ENCODE measurements at regions of chr19 and their contacts with region 1.

Region 1: GRCh38 chr19:50537762-50538230 is 24.1 kb upstream of the ASPDH start:
- DNase-seq: no peak
- ATAC-seq: peak; percentile 88
- H3K4me3 ChIP-seq: no peak overlapping the region
- H3K27ac ChIP-seq: no peak overlapping the region
- H3K4me1 ChIP-seq: peaks cover 8% of the 10 kb centered on the region
- H3K27me3 ChIP-seq: no peaks in the 10 kb centered on the region
- CTCF ChIP-seq: peak; percentile 77 to 83 (median 82)
- EP300 ChIP-seq: no peak
- POLR2A ChIP-seq: no peak
- RAD21 ChIP-seq: peak; percentile 58

Region 2: DNA sequence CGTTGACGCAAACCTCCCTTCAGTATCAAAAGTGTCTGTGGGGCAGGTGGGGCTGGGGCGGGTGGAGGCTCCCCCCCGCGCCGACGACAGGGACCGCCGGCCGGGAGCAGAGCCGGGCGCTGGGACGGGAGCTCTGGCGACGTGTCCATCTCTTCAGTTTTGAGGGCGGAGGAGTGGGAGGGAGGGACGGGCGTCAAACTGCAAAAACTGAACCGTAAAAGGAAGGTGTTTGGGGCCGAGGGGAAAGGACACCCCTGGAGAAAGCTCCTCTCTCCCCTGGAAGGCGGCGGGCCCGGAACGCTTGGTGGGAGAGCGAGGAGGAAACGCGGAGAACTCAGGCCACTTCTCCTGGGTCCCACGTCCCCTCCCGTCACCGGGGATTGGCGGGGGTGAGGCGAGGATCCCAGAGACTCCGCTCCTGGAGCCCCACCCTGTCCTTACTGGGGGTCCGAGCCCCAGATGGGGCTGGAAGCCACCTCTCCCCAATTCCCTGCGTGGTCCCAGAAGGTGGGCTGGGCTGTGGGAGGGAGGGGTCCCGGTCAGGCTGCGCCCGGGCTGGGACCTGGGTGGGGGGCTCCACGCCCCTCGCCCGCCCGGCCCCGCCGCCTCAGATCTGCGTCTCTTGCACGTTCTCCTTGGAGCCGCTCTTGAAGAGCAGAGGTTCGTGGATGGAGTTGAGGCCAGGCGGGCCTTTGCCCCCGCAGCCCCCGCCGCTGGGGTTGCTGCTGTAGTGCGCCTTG is 20.7 kb before region 1 on chr19:
- CTCF ChIA-PET with region 1: no interaction called
- POLR2A ChIA-PET with region 1: no interaction called
- RAD21 ChIA-PET with region 1: no interaction called
- SMC1A ChIA-PET with region 1: no interaction called
- in situ Hi-C with region 1: no loop called
- intact Hi-C with region 1: no loop called
- DNase-seq: no peak
- ATAC-seq: no peak
- H3K4me3 ChIP-seq: no peak overlapping the region
- H3K27ac ChIP-seq: no peak overlapping the region
- H3K4me1 ChIP-seq: no peaks in the 10 kb centered on the region
- H3K27me3 ChIP-seq: no peaks in the 10 kb centered on the region
- CTCF ChIP-seq: no peak
- EP300 ChIP-seq: no peak
- POLR2A ChIP-seq: no peak
- RAD21 ChIP-seq: no peak

Region 3: DNA sequence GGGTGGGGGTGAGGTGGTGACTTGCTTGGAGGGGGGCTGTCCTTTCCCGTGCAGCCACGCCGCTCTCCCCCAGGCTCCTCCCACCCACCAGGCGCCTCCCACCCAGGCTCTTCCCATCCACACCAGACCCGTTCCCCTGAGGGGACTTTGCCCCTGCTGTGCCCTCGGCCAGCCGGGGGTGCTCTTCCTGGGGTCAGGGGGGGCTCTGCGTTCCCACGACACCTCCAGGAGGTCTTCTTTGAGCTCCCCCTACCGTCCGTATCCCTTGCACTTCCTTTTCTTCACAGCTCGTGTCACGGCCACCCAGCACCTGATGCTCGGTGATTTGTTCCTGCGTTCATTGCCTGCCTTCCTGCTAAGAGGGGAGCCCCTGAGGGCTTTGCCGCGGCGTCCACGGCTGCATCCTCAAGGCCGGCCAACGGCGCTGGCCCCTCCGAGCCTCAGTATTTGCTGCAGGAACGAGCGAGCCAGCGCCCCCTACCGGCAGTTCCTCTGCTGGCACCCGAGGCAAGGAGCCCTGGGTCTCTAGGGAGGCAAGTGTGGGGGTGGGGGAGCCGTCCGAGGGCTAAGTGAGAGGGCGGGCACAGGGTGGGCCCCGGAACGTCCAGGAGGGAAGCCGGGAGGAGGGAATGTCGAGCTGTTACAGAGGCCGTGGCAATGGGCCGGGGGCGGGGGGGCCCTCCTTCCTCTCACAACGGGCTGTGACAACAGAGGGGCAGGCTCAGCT is 18.6 kb after region 1 on chr19:
- CTCF ChIA-PET with region 1: interaction called, 117 read pairs
- POLR2A ChIA-PET with region 1: no interaction called
- RAD21 ChIA-PET with region 1: interaction called, 13 read pairs
- SMC1A ChIA-PET with region 1: interaction called, 16 read pairs
- in situ Hi-C with region 1: no loop called
- intact Hi-C with region 1: no loop called
- DNase-seq: peak; percentile 15
- ATAC-seq: peak; percentile 95
- H3K4me3 ChIP-seq: peak overlapping the region; percentile 56; the same call in 1 of the 2 replicates
- H3K27ac ChIP-seq: no peak overlapping the region
- H3K4me1 ChIP-seq: no peaks in the 10 kb centered on the region; the same call in 1 of the 2 replicates
- H3K27me3 ChIP-seq: peaks cover 0 to 5% of the 10 kb centered on the region in 2 experiments
- CTCF ChIP-seq: peak; percentile 74 to 93 (median 85)
- EP300 ChIP-seq: no peak
- POLR2A ChIP-seq: no peak
- RAD21 ChIP-seq: peak; percentile 40; the same call in 1 of the 2 replicates

Region 4: DNA sequence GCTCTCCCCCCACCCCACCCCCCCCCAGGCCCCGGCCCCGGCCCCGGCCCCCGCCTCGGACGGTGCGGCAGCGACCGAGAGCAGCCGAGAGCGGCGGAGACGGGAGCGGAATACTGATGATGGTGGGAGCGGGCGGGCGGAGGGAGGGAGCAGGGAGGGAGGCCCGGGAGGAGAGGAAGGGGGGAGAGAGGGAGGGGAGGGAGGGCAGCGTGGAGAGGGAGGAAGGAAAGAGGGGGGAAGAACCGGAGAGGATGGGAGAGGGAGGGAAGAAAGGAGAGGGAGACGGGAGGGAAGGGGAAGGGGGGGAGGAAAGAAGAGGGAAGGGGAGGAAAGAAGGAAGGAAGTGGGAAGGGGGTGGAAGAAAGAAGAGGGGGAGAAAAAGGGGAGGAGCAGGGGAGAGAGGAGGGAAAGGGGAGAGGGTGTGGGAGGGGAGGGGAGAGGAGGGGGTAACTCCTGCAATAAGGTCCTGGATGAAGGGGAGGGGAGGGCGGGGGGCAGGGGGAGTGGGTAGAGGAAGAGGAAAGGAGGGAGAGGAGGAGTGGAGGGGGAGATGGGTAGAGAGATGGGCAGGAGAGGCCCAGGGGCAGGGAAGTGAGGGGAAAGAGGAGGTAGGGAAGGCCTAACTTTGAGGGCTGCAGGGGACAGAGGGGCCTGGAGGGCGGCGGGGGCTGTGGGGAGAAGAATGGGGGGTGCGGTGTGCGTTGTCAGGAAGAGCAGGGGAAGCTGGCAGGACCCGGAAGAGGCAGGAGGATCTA is 30.7 kb after region 1 on chr19 and contains the start of gene LRRC4B:
- CTCF ChIA-PET with region 1: no interaction called
- POLR2A ChIA-PET with region 1: no interaction called
- RAD21 ChIA-PET with region 1: no interaction called
- SMC1A ChIA-PET with region 1: no interaction called
- in situ Hi-C with region 1: no loop called
- intact Hi-C with region 1: no loop called
- DNase-seq: no peak
- ATAC-seq: no peak
- H3K4me3 ChIP-seq: no peak within 1 kb of the TSS
- H3K27ac ChIP-seq: no peak within 1 kb of the TSS
- H3K4me1 ChIP-seq: peaks cover 7% of the 10 kb centered on the region
- H3K27me3 ChIP-seq: peaks cover 2 to 11% of the 10 kb centered on the region in 2 experiments; a peak in 3 of 4 replicates
- CTCF ChIP-seq: no peak
- EP300 ChIP-seq: no peak
- POLR2A ChIP-seq: no peak
- RAD21 ChIP-seq: no peak
- polyA plus RNA-seq, gene LRRC4B: not detected

Region 5: GRCh38 chr19:50580970-50581634 is 43.3 kb after region 1 on chr19:
- CTCF ChIA-PET with region 1: no interaction called
- POLR2A ChIA-PET with region 1: no interaction called
- RAD21 ChIA-PET with region 1: no interaction called
- SMC1A ChIA-PET with region 1: no interaction called
- in situ Hi-C with region 1: no loop called
- intact Hi-C with region 1: no loop called
- DNase-seq: no peak
- ATAC-seq: no peak
- H3K4me3 ChIP-seq: no peak overlapping the region
- H3K27ac ChIP-seq: no peak overlapping the region
- H3K4me1 ChIP-seq: no peaks in the 10 kb centered on the region
- H3K27me3 ChIP-seq: no peaks in the 10 kb centered on the region; a peak in 2 of 4 replicates
- CTCF ChIP-seq: no peak
- EP300 ChIP-seq: no peak
- POLR2A ChIP-seq: no peak
- RAD21 ChIP-seq: no peak

Region 6: GRCh38 chr19:50785329-50785728 is 247.5 kb after region 1 on chr19:
- CTCF ChIA-PET with region 1: interaction called, 16 read pairs
- POLR2A ChIA-PET with region 1: no interaction called
- RAD21 ChIA-PET with region 1: interaction called, 13 read pairs
- SMC1A ChIA-PET with region 1: interaction called, 8 read pairs
- in situ Hi-C with region 1: loop called (anchors 5 kb)
- intact Hi-C with region 1: loop called (anchors 2 kb)
- DNase-seq: no peak
- ATAC-seq: no peak
- H3K4me3 ChIP-seq: no peak overlapping the region
- H3K27ac ChIP-seq: no peak overlapping the region
- H3K4me1 ChIP-seq: no peaks in the 10 kb centered on the region; the same call in 1 of the 2 replicates
- H3K27me3 ChIP-seq: no peaks in the 10 kb centered on the region
- CTCF ChIP-seq: no peak
- EP300 ChIP-seq: no peak
- POLR2A ChIP-seq: no peak
- RAD21 ChIP-seq: no peak